ENCODE measurements at regions of chr13 and their contacts with region 1.

Region 1: GRCh38 chr13:107124730-107125129 is 556.8 kb upstream of the ARGLU1 start:
- DNase-seq: no peak

Region 2: GRCh38 chr13:106541826-106542225 is 582.9 kb before region 1 on chr13:
- intact Hi-C with region 1: loop called (anchors 5 kb)
- DNase-seq: no peak

Region 3: GRCh38 chr13:107069108-107069786 is 55.5 kb before region 1 on chr13:
- intact Hi-C with region 1: no loop called
- DNase-seq: no peak

Region 4: GRCh38 chr13:107157271-107157670 is 32.5 kb after region 1 on chr13:
- intact Hi-C with region 1: no loop called
- DNase-seq: no peak

Region 5: GRCh38 chr13:107234319-107235073 is 109.8 kb after region 1 on chr13:
- intact Hi-C with region 1: no loop called
- DNase-seq: peak in 5 of 10 donors; percentile 30 to 87 (median 77)

Measured in posterior cingulate gyrus (tissue), 11 donors.